ENCODE measurements at regions of chrX and their contacts with region 1.

Region 1: DNA sequence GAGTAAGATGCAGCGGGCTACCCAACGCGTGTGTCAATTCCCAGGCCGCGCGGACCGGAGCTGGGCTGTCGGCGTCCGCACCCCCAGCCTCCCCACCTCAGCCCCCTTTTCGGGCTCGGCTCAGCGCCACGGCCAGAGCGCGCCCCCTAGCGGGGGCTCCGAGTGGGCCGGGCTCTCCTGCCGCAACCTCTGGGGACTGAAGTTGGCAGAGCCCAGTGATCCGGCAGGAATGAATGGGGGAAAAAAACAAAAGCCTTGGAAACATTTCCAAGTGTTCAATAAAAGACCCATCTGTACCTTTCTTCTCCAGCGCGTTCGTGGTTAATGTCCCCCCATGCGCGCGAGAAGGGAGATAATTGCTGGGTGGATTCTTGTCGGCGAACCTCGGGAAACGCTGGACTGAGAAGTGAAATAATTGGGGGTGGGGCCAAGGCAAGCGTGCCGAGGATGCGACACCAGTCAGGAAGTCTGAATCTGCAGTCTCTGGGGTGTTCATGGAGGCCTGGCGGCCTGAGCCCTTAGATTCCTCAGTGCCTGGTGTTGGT is 5.2 kb upstream of the ARX start:
- DNase-seq: peak; percentile 20 to 57
- ATAC-seq: peak; percentile 57 to 79 (median 73)
- H3K4me3 ChIP-seq: no peak overlapping the region
- H3K4me3 Mint-ChIP-seq: peak overlapping the region; percentile 31
- H3K27ac ChIP-seq: no peak overlapping the region
- H3K27ac Mint-ChIP-seq: no peak overlapping the region
- H3K4me1 ChIP-seq: peaks cover 28% of the 10 kb centered on the region
- H3K4me1 Mint-ChIP-seq: peaks cover 15 to 23% of the 10 kb centered on the region in 2 donors
- H3K27me3 ChIP-seq: peaks cover 40% of the 10 kb centered on the region
- H3K27me3 Mint-ChIP-seq: peaks cover 45 to 70% of the 10 kb centered on the region in 2 donors
- CTCF ChIP-seq: peak; percentile 57

Region 2: DNA sequence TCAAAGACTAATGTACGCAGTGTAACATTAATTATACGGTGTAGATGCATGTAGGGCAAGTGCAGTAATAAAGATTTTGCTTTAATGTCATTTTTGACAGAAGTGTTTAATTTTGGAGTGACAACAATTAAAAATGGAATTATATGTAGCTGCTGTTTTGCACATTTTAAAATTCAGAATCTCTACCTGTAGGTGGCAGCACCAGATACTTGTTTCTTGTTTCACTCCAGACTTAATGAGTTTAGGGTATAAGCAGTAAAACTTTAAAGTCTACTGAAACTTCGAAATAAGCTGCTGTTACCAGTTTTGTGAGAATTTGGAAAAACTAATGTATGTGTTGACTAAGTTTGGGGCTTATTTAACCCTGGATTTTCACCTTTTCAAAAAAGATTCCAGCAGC is 182.3 kb before region 1 on chrX:
- intact Hi-C with region 1: loop called (anchors 10 kb)
- DNase-seq: peak in 1 of 2 donors; percentile 38
- ATAC-seq: no peak
- H3K4me3 ChIP-seq: no peak overlapping the region
- H3K4me3 Mint-ChIP-seq: no peak overlapping the region
- H3K27ac ChIP-seq: no peak overlapping the region
- H3K27ac Mint-ChIP-seq: no peak overlapping the region
- H3K4me1 ChIP-seq: no peaks in the 10 kb centered on the region
- H3K4me1 Mint-ChIP-seq: no peaks in the 10 kb centered on the region
- H3K27me3 ChIP-seq: no peaks in the 10 kb centered on the region
- H3K27me3 Mint-ChIP-seq: no peaks in the 10 kb centered on the region
- CTCF ChIP-seq: peak; percentile 55

Measured in natural killer cell (primary cell).